ENCODE measurements at regions of chr1 and their contacts with region 1.

Region 1: DNA sequence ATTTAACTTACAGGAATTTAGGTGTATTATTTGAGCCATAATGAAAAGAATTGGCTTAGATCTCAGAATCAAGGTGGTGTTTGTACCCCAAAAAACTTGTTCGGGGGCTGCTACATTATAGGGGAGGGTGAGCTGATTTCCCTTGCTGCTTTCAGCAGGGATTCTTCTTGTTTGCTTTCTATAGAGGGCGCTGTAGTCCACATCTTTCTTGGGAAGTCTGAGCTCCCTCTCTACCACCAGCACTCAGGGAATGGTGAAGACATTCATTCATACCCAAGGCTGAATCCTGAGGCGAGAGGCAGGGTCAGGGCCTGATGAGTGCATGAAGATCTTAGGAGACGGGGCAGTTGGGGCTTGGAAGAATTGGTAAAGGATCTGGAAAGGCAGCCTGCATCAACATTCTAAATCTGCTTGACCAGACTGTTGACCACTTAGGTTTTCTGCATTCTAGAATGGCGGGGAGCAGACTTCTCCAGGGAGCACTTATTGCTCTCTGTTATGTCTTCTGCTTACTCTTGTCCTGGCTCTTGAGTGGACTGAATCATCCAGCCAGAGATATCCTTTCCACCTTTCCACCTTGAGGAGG is 18.9 kb downstream of the SPATA46 start:
- DNase-seq: peak; percentile 18
- ATAC-seq: peak; percentile 90
- H3K4me3 ChIP-seq: no peak overlapping the region
- H3K27ac ChIP-seq: no peak overlapping the region
- H3K4me1 ChIP-seq: no peaks in the 10 kb centered on the region
- H3K27me3 ChIP-seq: no peaks in the 10 kb centered on the region
- CTCF ChIP-seq: peak; percentile 70 to 79 (median 73); a peak in 5 of 6 replicates
- POLR2A ChIP-seq: no peak
- RAD21 ChIP-seq: peak; percentile 88

Region 2: GRCh38 chr1:162391790-162392563 is 34.2 kb after region 1 on chr1:
- CTCF ChIA-PET with region 1: interaction called, 9 read pairs
- POLR2A ChIA-PET with region 1: no interaction called
- RAD21 ChIA-PET with region 1: interaction called in 1 of 2 experiments, 3 read pairs
- intact Hi-C with region 1: loop called (anchors 2 kb)
- DNase-seq: peak; percentile 42
- ATAC-seq: peak; percentile 73
- H3K4me3 ChIP-seq: no peak overlapping the region
- H3K27ac ChIP-seq: no peak overlapping the region
- H3K4me1 ChIP-seq: peaks cover 0 to 4% of the 10 kb centered on the region in 2 experiments; a peak in 2 of 4 replicates
- H3K27me3 ChIP-seq: no peaks in the 10 kb centered on the region
- CTCF ChIP-seq: peak; percentile 76 to 86 (median 82)
- POLR2A ChIP-seq: no peak
- RAD21 ChIP-seq: peak; percentile 93

Region 3: DNA sequence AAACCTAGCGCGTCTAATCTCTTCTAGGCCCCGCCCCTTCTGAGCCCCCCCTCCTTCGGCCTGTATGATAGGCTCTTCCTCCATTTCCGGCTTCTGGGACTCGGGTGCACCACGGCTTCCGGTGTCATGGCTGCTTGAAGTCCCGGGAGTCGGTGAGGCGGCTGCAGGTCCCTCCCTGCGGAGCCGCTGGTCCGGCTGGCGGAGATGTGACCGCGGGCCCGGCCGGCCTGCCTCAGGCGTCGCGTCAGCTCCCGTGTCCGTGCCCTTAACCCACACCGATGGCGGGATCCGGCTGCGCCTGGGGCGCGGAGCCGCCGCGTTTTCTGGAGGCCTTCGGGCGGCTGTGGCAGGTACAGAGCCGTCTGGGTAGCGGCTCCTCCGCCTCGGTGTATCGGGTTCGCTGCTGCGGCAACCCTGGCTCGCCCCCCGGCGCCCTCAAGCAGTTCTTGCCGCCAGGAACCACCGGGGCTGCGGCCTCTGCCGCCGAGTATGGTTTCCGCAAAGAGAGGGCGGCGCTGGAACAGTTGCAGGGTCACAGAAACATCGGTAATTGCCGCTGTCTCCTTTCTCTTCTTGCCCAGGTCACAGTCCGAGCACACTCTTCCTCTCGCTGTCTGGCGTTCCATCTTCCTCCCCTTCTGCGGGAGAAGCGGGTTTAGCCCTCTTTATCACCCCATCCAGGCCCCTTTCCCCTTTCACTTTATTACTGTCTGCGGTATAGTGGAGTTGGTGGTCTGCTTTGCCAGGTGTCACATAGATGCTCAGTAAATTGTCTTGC is 140.1 kb after region 1 on chr1 and contains the start of gene UHMK1:
- CTCF ChIA-PET with region 1: no interaction called
- POLR2A ChIA-PET with region 1: no interaction called
- RAD21 ChIA-PET with region 1: no interaction called
- intact Hi-C with region 1: loop called (anchors 10 kb)
- DNase-seq: peak; percentile 76
- ATAC-seq: peak; percentile 98
- H3K4me3 ChIP-seq: peak within 1 kb of the TSS; percentile 81 to 90
- H3K27ac ChIP-seq: peak within 1 kb of the TSS; percentile 79
- H3K4me1 ChIP-seq: peaks cover 9 to 14% of the 10 kb centered on the region in 2 experiments
- H3K27me3 ChIP-seq: no peaks in the 10 kb centered on the region
- CTCF ChIP-seq: no peak
- POLR2A ChIP-seq: peak; percentile 31
- RAD21 ChIP-seq: no peak
- total RNA-seq, gene UHMK1: 75.1 TPM

Region 4: GRCh38 chr1:162561037-162561616 is 203.4 kb after region 1 on chr1:
- CTCF ChIA-PET with region 1: no interaction called
- POLR2A ChIA-PET with region 1: no interaction called
- RAD21 ChIA-PET with region 1: no interaction called
- intact Hi-C with region 1: loop called (anchors 10 kb)
- DNase-seq: peak; percentile 85
- ATAC-seq: peak; percentile 93
- H3K4me3 ChIP-seq: peak overlapping the region; percentile 80 to 96
- H3K27ac ChIP-seq: peak overlapping the region; percentile 64
- H3K4me1 ChIP-seq: peaks cover 0 to 21% of the 10 kb centered on the region in 2 experiments; a peak in 3 of 4 replicates
- H3K27me3 ChIP-seq: no peaks in the 10 kb centered on the region
- CTCF ChIP-seq: no peak
- POLR2A ChIP-seq: no peak
- RAD21 ChIP-seq: no peak

Region 5: GRCh38 chr1:162612606-162613400 is 255.0 kb after region 1 on chr1:
- CTCF ChIA-PET with region 1: interaction called, 6 read pairs
- POLR2A ChIA-PET with region 1: no interaction called
- RAD21 ChIA-PET with region 1: no interaction called
- intact Hi-C with region 1: loop called (anchors 10 kb)
- DNase-seq: no peak
- ATAC-seq: 0 out of 2 replicates have a peak, but pooled peaks have one; percentile 9
- H3K4me3 ChIP-seq: no peak overlapping the region
- H3K27ac ChIP-seq: no peak overlapping the region
- H3K4me1 ChIP-seq: no peaks in the 10 kb centered on the region
- H3K27me3 ChIP-seq: no peaks in the 10 kb centered on the region
- CTCF ChIP-seq: no peak
- POLR2A ChIP-seq: no peak
- RAD21 ChIP-seq: no peak

Measured in HCT116 (cell line).